Dendritic cell treated with granulocyte-macrophage colony-stimulating factor and Interleukin-4, amounts not matched to agents 40 ng/mL and 50 ng/mL, for 4 days (primary cell): ENCODE measurements at regions of chr1 and their contacts with region 1.

Region 1: GRCh38 chr1:119140177-119141019 is at the start of gene WARS2:
- H3K4me3 Mint-ChIP-seq: no peak within 1 kb of the TSS
- H3K27ac Mint-ChIP-seq: no peak within 1 kb of the TSS
- H3K4me1 Mint-ChIP-seq: peaks cover 11% of the 10 kb centered on the region
- H3K27me3 Mint-ChIP-seq: no peaks in the 10 kb centered on the region

Region 2: DNA sequence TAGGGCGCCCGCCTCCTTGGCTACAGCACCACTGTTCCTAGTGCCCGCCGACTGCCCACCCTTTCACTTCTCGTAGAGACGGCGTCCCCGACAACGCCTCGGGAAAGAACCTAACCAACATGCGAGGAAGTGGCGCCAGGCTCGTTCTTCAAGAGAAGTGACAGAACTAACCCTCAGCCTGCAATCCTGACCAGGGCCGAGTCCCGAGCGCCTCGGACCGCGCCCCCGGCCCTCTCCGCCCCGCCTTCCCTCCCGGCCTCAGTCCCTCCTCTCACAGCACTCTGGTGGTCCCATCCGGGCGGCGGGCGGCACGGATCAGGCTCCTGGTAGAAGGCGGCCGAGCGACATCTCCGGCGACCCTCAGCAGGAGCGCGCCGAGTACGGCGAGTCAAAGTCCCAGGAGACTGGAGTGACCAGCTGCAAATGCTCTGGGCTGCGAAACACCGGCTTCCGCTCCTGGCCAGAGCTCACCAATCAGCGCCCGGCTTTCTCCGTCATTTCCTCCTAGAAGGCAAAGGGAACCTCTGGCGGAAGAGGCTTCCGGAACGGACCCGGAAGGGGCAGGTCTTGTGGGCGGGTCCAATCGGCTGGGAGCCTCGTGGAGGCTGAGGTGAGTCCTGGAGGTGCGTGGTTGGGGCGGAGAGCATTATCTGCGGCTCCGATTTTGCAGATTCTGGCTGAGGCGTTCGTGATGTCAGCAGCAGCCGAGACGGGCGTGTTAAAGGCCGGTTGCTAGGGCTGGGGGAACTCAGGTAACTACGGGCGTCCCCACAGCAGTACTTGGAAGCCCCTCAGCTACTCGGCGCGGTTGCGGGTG is 1211.0 kb before region 1 on chr1 and contains the starts of genes GDAP2 and WDR3:
- intact Hi-C with region 1: loop called (anchors 2 kb)
- H3K4me3 Mint-ChIP-seq: peak within 1 kb of the TSS; percentile 90
- H3K27ac Mint-ChIP-seq: peak within 1 kb of the TSS; percentile 98
- H3K4me1 Mint-ChIP-seq: peaks cover 49% of the 10 kb centered on the region
- H3K27me3 Mint-ChIP-seq: no peaks in the 10 kb centered on the region

Region 3: DNA sequence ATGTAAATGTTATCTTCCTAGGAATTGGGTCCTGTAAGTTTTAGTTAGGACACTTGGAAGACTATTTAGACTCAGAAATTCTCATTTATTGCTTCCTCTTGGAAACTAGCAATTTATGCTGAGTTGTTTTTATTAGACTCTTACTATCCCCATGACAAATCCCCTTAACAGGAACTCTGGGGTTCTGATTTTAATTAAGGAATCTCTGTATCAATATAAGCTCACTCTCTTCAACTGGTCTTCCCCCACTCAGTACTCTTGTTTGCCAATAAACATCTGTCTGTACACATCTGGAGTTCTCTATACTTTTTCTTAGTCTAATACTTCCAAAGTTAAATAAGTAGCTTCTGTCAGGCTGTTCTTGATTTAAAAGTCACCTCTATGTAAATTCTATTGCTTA is 88.1 kb before region 1 on chr1:
- intact Hi-C with region 1: no loop called
- H3K4me3 Mint-ChIP-seq: no peak overlapping the region
- H3K27ac Mint-ChIP-seq: no peak overlapping the region
- H3K4me1 Mint-ChIP-seq: no peaks in the 10 kb centered on the region
- H3K27me3 Mint-ChIP-seq: no peaks in the 10 kb centered on the region

Region 4: DNA sequence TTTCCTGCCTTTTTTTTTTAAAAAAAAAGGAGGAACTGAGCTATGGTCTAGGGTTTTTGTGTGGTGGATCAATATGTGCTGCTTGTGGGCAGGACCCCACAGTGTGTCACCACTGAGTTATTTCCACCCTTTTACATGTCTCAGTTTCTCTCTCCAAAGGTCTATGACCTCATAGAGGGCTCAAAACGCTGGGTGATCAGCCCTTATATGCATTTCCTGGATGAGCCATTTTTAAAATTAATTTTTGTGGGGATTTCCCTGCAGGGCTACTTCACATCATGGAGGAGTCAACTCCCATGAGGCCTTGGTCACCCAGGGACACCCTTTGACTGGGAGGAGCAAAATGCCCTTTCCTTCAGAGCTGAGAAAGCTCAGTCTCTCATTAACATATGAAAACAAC is 207.5 kb after region 1 on chr1:
- intact Hi-C with region 1: no loop called
- H3K4me3 Mint-ChIP-seq: no peak overlapping the region
- H3K27ac Mint-ChIP-seq: no peak overlapping the region
- H3K4me1 Mint-ChIP-seq: no peaks in the 10 kb centered on the region
- H3K27me3 Mint-ChIP-seq: peaks cover 3% of the 10 kb centered on the region

Region 5: GRCh38 chr1:119647734-119648619 is 507.6 kb after region 1 on chr1 and contains the start of gene ZNF697:
- intact Hi-C with region 1: loop called (anchors 5 kb)
- H3K4me3 Mint-ChIP-seq: peak within 1 kb of the TSS; percentile 97
- H3K27ac Mint-ChIP-seq: peak within 1 kb of the TSS; percentile 94
- H3K4me1 Mint-ChIP-seq: peaks cover 53% of the 10 kb centered on the region
- H3K27me3 Mint-ChIP-seq: peaks cover 41% of the 10 kb centered on the region